Right ventricle myocardium superior (tissue), 1 donor: ENCODE measurements at regions of chr10 and their contacts with region 1.

Region 1: DNA sequence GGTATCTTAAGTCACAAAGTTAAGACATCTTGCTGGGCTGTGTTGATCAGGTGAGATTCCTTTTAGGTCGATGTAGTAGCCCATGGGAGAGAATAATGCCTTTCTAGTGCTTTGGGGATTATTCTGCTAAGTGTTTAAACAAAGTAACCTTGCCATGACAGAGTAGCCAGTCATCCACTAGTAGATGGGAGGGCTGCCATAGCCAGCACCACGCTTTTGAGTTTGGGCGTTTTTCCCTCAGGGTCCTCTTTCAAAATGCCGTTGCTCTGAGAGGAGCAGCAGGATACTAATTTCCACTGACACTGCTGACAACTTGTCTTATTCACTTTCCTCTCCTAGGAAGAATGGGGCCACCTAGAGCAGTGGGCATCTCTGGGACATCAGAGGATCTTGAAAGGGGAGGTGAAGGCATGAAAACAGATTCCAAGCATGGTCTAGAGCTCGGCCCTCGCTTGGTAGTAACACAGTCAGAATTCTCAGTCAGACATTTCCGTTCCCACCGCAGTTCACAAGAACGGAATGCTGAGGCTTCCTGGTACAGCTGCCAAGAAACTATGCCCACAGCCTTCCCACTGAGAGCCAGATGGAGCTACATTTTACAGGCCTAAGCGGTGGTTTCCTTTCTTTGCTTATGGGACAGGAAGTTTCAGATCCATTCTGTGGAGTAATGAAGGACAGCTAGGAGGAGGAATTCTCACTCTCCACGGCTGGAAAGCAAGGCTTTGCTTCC is 15.3 kb upstream of the RSU1 start:
- DNase-seq: no peak
- ATAC-seq: peak; percentile 45

Region 2: DNA sequence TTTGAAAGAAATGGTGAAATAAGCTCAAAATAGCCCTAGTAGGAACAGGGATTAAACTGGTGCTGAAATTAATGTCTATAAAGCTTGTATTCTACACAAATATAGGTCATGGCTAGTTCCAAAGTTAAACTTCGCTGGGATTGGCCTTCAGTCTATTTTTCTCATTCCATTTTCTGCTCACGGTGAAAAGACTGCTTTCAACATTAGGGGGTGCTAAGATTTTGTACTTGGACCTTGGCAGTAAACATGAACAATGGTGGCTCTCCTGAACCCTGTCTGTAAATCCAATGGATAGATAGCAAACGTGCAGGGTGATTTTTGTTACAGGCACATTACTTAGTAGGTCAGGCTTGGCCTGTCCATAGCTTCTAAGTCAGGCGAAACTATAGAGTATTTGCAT is 20.7 kb after region 1 on chr10:
- intact Hi-C with region 1: no loop called
- DNase-seq: no peak
- ATAC-seq: no peak

Region 3: GRCh38 chr10:17228091-17228940 is 395.8 kb after region 1 on chr10 and contains the start of gene VIM:
- intact Hi-C with region 1: no loop called
- DNase-seq: peak; percentile 92
- ATAC-seq: peak; percentile 70
- total RNA-seq, gene VIM: 364 TPM

Region 4: DNA sequence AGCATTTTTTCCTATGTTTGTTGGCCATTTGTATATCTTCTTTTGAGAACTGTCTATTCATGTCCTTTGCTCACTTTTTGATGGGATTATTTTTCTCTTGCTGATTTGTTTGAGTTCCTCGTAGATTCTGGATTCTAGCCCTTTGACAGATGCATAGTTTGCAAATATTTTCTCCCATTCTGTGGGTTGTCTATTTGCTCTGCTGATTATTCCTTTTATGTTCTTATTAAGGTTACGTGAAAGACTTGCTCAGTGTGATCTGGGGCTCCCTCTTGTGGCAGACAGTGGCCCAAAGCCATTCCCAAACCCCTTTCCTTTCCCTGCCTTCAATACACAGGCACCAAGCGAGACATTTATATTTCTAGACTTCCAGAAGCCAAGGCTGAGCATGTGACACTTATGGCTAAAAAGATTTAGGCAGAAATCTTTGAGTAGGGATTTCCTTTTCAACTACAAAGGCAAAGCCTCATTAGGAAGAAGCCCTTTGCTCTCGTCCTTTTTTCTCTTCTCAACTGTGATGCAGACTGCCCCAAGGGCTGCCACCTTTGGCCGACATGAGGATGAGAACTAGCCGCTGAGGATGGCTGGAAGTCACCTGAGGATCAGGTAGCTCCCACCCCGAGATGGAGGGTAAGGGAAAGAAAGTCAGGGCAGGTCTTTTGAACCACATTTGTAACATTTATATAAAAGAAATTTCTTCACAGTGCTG is 598.3 kb after region 1 on chr10:
- intact Hi-C with region 1: loop called (anchors 10 kb)
- DNase-seq: peak; percentile 71
- ATAC-seq: peak; percentile 79